Heart left ventricle (tissue), 16 donors: ENCODE measurements at regions of chr10 and their contacts with region 1.

Region 1: DNA sequence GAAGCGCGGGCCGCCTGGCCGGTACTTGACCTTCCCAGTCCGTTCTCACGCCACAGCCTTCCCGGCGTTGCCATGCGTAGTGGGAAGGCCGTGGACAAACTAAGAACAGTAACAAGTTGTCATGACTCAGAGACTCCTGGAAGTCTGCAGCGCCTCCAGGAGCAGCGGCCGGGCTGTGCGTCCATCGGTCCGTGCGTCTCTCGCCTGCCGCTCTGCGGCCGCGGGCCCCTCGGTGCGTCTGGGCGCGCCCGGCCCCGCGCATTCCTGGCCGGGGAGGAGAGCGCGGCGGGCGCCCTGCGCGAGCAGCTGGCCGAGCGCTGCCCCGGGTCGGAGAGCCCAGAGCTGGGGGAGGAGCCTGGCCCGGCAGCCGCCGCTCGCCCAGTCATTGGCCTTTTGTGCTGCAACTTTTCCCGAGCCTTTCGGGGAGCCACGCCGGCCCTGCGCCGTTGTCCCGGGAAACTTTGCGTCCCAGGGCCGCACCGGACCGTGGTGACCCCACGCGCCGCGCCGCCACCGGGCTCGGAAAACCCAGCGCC is 123.7 kb downstream of the TACC2 start:
- DNase-seq: peak; percentile 86 to 94 (median 91)
- ATAC-seq: peak; percentile 54 to 90 (median 83)
- H3K4me3 ChIP-seq: peak overlapping the region; percentile 64 to 92 (median 81)
- H3K27ac ChIP-seq: peak overlapping the region; percentile 97 to 100 (median 99)
- H3K4me1 ChIP-seq: peaks cover 4 to 56% (median 42%) of the 10 kb centered on the region in 12 donors
- H3K27me3 ChIP-seq: peaks cover 0 to 16% (median 0%) of the 10 kb centered on the region in 9 donors
- CTCF ChIP-seq: peak; percentile 25 to 79 (median 54)
- POLR2A ChIP-seq: peak in 1 of 2 donors; percentile 67

Region 2: GRCh38 chr10:121927841-121928527 is 184.7 kb before region 1 on chr10 and contains the start of gene ATE1:
- intact Hi-C with region 1: loop called in 3 of 10 experiments (anchors 2 to 5 kb)
- DNase-seq: peak; percentile 92 to 95 (median 94)
- ATAC-seq: peak; percentile 91 to 98 (median 96)
- H3K4me3 ChIP-seq: peak within 1 kb of the TSS; percentile 82 to 100 (median 94)
- H3K27ac ChIP-seq: peak within 1 kb of the TSS; percentile 90 to 100 (median 98)
- H3K4me1 ChIP-seq: peaks cover 0 to 41% (median 18%) of the 10 kb centered on the region in 12 donors
- H3K27me3 ChIP-seq: no peaks in the 10 kb centered on the region
- CTCF ChIP-seq: peak in 6 of 12 donors; percentile 10 to 46 (median 26)
- POLR2A ChIP-seq: peak in 1 of 2 donors; percentile 73
- total RNA-seq, gene ATE1: 30.3 to 50.1 (median 40.4) TPM

Region 3: GRCh38 chr10:122019414-122019975 is 93.2 kb before region 1 on chr10:
- intact Hi-C with region 1: no loop called
- DNase-seq: peak in 1 of 5 donors; percentile 67
- ATAC-seq: peak in 3 of 4 donors; percentile 27 to 58 (median 56)
- H3K4me3 ChIP-seq: peak overlapping the region in 5 of 12 donors; percentile 5 to 25 (median 13)
- H3K27ac ChIP-seq: peak overlapping the region; percentile 6 to 87 (median 64)
- H3K4me1 ChIP-seq: peaks cover 0 to 48% (median 7%) of the 10 kb centered on the region in 12 donors
- H3K27me3 ChIP-seq: peaks cover 0 to 10% (median 0%) of the 10 kb centered on the region in 9 donors
- CTCF ChIP-seq: no peak
- POLR2A ChIP-seq: no peak

Region 4: GRCh38 chr10:122062831-122063674 is 49.6 kb before region 1 on chr10:
- intact Hi-C with region 1: loop called in 4 of 10 experiments (anchors 2 to 5 kb)
- DNase-seq: peak; percentile 83 to 92 (median 86)
- ATAC-seq: peak; percentile 96 to 99 (median 98)
- H3K4me3 ChIP-seq: no peak overlapping the region
- H3K27ac ChIP-seq: peak overlapping the region; percentile 56 to 95 (median 86)
- H3K4me1 ChIP-seq: peaks cover 6 to 28% (median 17%) of the 10 kb centered on the region in 12 donors
- H3K27me3 ChIP-seq: no peaks in the 10 kb centered on the region
- CTCF ChIP-seq: no peak
- POLR2A ChIP-seq: peak in 1 of 2 donors; percentile 49

Region 5: DNA sequence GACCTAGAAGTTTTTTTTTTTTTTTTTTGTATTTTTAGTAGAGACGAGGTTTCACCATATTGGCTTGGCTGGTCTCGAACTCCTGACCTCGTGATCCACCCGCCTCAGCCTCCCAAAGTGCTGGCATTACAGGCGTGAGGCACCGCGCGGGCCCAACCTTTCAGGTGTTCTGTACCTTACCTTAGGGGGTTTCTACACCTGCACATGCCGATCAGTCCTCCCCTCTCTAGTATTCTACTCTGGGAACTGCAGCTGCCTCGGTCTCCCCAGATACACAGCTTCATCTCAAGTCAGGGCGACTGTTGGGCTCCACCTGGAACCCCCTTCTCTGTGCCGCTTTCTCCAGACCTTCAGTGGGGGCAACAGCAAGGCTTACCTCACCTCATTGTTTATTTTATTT is 43.8 kb before region 1 on chr10:
- intact Hi-C with region 1: loop called in 1 of 10 experiments (anchors 5 kb)
- DNase-seq: no peak
- ATAC-seq: no peak
- H3K4me3 ChIP-seq: no peak overlapping the region
- H3K27ac ChIP-seq: no peak overlapping the region
- H3K4me1 ChIP-seq: peaks cover 0 to 35% (median 7%) of the 10 kb centered on the region in 12 donors
- H3K27me3 ChIP-seq: no peaks in the 10 kb centered on the region
- CTCF ChIP-seq: no peak
- POLR2A ChIP-seq: no peak

Region 6: DNA sequence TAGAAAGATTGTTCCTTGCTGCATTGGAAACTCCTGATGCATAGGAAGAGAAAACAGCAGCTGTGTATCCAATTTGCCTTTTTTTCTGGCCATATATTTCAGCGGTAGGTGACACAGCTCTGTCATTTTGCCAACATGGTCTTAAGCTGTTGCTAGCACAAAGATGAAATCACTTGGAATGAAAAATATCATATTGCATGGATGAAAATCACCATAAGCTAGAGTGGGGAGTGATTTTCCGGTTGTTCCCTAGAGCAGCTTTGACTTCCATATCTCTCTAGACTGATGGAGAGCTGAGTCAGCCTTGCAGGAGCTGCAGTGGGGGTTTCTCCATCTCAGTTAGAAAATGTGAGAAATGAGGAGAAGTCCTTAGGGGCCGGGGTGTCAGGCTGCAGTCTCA is 120.1 kb after region 1 on chr10:
- intact Hi-C with region 1: no loop called
- DNase-seq: no peak
- ATAC-seq: no peak
- H3K4me3 ChIP-seq: no peak overlapping the region
- H3K27ac ChIP-seq: peak overlapping the region in 2 of 12 donors; percentile 26 to 71
- H3K4me1 ChIP-seq: peaks cover 0 to 27% (median 1%) of the 10 kb centered on the region in 12 donors
- H3K27me3 ChIP-seq: no peaks in the 10 kb centered on the region
- CTCF ChIP-seq: no peak
- POLR2A ChIP-seq: no peak